ENCODE measurements at regions of chr4 and their contacts with region 1.

Region 1: DNA sequence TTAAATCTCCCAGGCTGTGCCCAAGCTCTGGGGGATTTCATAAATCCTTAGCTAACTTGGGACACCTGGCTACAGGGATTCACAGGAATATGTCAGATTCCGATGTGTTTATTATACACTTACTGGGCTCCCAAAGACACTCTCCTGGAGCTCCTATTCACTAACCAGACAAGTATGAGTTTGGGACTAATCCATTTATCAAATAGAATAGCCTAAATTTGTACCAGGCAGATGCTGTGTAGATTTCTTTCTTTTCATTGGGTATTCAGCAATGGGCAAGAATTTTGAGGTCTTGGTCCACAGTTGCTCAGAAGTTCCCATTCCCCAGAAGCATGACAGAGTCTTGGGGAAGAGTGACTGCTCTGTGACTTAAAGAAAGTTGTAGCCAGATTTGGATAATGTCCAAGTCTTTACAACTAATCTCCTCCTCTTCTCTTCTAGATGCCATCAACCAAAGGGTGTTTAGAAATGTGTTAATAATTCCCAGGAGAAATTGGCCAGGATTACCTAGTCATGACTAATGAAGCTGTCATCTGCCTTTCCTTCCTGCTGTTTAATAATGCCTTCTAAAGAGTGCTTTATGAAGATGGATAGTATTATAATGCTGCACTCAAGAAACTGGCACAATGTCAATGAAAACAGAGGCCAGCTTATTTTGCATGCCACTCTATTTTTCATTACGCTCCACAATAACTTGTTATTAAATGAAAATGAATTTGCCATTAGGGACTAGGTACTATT is 120.9 kb downstream of the CHIC2 start:
- DNase-seq: no peak
- H3K4me3 ChIP-seq: no peak overlapping the region
- H3K27ac ChIP-seq: no peak overlapping the region
- H3K4me1 ChIP-seq: no peaks in the 10 kb centered on the region
- H3K27me3 ChIP-seq: no peaks in the 10 kb centered on the region
- CTCF ChIP-seq: no peak
- POLR2A ChIP-seq: no peak

Region 2: GRCh38 chr4:52028969-52029368 is 1914.5 kb before region 1 on chr4:
- intact Hi-C with region 1: loop called (anchors 5 kb)
- DNase-seq: no peak
- H3K4me3 ChIP-seq: no peak overlapping the region
- H3K27ac ChIP-seq: no peak overlapping the region
- H3K4me1 ChIP-seq: peaks cover 14% of the 10 kb centered on the region
- H3K27me3 ChIP-seq: no peaks in the 10 kb centered on the region
- CTCF ChIP-seq: no peak
- POLR2A ChIP-seq: no peak

Region 3: DNA sequence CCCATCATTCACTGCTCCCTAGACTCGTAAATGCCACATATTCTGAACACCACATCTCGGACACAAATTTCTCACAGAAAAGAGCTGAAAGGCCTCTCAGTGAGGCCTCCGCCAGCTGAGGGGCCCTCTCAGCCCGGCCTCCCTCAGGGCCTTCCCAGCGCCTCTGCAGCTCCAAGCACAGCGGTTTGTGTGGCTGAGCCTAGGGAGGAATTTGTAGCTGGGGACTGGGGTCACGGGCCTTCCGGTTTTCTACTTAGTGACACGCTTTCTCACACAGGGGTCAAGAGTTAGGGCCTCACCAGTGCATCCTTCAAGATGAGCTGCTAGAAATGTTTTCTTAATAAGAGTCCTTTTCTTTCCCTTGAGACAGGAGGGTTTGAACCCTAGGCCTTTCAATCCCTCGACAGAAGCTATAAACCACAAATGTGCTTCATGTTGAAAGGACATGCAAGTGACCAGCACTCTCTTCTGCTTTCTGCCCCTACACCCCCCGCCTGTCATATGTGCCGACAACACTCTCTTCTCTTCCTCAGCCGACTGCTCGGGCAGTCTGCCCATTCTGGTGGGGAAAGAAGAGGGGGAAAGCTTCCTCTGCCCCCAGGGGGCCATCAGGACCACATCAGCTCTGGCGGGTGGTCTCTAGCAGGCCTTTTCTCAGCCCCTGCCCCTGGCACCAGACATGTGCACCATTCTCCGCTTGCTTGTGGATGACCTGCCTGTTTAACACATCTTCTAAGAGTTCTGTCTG is 16.0 kb after region 1 on chr4:
- intact Hi-C with region 1: no loop called
- DNase-seq: no peak
- H3K4me3 ChIP-seq: no peak overlapping the region
- H3K27ac ChIP-seq: no peak overlapping the region
- H3K4me1 ChIP-seq: peaks cover 8% of the 10 kb centered on the region
- H3K27me3 ChIP-seq: no peaks in the 10 kb centered on the region
- CTCF ChIP-seq: no peak
- POLR2A ChIP-seq: no peak

Region 4: GRCh38 chr4:54687887-54688841 is 744.6 kb after region 1 on chr4:
- intact Hi-C with region 1: no loop called
- DNase-seq: no peak
- H3K4me3 ChIP-seq: no peak overlapping the region
- H3K27ac ChIP-seq: no peak overlapping the region
- H3K4me1 ChIP-seq: no peaks in the 10 kb centered on the region
- H3K27me3 ChIP-seq: no peaks in the 10 kb centered on the region
- CTCF ChIP-seq: no peak
- POLR2A ChIP-seq: no peak

Measured in vagina (tissue), 2 donors.